ENCODE measurements at regions of chr1 and their contacts with region 1.

Region 1: DNA sequence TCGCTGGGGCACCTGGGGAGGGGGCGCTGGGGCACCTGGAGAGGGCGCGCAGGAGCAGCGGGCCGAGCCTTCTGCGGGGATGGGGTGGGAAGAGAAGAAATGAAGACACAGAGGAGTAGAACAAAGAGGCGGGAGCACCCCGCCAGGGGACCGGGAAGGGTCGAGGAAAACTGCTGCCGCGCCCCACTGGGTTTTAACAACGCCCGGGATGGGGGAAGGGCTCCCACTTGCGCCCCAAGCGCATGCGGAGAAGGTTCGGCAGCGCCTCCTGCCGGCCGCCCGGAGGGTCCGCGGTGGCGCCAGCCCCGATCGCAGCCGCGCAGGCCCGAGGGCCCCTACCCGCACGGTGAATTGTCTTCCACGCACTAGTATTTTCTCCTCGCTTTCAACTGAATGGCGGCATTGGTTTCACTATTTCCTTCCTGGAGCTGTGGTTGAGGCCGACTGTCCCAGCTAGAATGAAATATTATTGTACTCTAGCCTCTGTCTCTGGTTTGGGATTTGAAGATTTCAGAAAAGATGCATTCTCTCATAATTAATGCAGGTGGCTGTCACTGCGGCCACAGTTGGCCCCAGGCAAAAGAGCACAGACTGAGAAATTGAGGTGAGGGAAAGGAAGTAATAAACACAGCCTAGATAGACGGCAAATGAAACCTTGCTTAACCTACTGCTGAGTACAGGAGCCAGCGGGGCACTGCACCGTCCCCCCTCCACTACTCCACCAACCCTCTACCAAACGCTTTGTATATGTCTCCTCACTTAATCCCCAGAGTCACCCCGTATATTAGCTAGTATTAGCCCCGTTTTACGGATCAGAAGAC is 57.3 kb downstream of the MAB21L3 start:
- DNase-seq: peak; percentile 93
- ATAC-seq: peak; percentile 96
- H3K4me3 ChIP-seq: peak overlapping the region; percentile 65
- H3K27ac ChIP-seq: peak overlapping the region; percentile 63
- H3K4me1 ChIP-seq: peaks cover 6% of the 10 kb centered on the region
- H3K27me3 ChIP-seq: no peaks in the 10 kb centered on the region
- CTCF ChIP-seq: peak; percentile 98

Region 2: GRCh38 chr1:116498789-116499628 is 330.5 kb after region 1 on chr1:
- intact Hi-C with region 1: loop called (anchors 10 kb)
- DNase-seq: no peak
- ATAC-seq: peak; percentile 87
- H3K4me3 ChIP-seq: no peak overlapping the region
- H3K27ac ChIP-seq: peak overlapping the region; percentile 55
- H3K4me1 ChIP-seq: peaks cover 36% of the 10 kb centered on the region
- H3K27me3 ChIP-seq: no peaks in the 10 kb centered on the region
- CTCF ChIP-seq: peak; percentile 84